ENCODE measurements at regions of chr4 and their contacts with region 1.

Region 1: DNA sequence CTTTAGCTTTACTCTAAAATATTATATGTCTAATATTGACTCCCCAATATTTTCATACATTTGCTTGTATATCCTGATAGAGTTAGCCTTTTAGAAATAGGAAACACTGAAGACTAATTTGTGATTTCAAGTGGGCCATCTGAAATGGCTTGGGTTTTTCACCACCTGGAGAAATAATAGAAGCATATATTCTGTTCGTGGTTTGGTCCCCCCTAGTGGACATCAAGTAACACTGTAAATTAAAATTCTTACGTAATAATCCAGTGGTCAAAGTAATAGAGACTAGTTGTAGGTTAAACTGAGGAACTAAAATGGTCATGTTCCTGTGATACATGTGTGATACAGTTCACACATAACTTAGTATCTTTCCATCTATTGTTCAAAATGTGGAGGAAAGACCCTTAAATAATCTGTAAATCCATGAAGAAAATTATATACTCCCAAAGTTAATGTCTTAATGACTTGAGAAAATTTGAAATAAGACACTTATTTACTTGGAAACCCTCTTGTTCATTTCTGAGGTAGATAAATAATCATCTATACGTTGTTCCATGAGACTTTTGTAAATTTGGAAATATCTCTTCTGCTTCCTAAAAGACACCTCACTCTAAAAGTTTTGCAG is 79.8 kb upstream of the SMARCAD1 start:
- DNase-seq: no peak
- H3K4me3 ChIP-seq: no peak overlapping the region
- H3K27ac ChIP-seq: no peak overlapping the region
- H3K4me1 ChIP-seq: no peaks in the 10 kb centered on the region
- H3K27me3 ChIP-seq: no peaks in the 10 kb centered on the region
- CTCF ChIP-seq: peak; percentile 45 to 67 (median 60)
- EP300 ChIP-seq: no peak
- POLR2A ChIP-seq: no peak

Region 2: GRCh38 chr4:93633721-93634120 is 494.1 kb before region 1 on chr4:
- in situ Hi-C with region 1: no loop called
- intact Hi-C with region 1: no loop called
- DNase-seq: no peak
- H3K4me3 ChIP-seq: no peak overlapping the region
- H3K27ac ChIP-seq: no peak overlapping the region
- H3K4me1 ChIP-seq: no peaks in the 10 kb centered on the region
- H3K27me3 ChIP-seq: no peaks in the 10 kb centered on the region
- CTCF ChIP-seq: no peak
- EP300 ChIP-seq: no peak
- POLR2A ChIP-seq: no peak

Region 3: GRCh38 chr4:93791570-93792195 is 336.1 kb before region 1 on chr4:
- in situ Hi-C with region 1: loop called in 3 of 4 experiments (anchors 10 to 25 kb)
- intact Hi-C with region 1: no loop called
- DNase-seq: peak; percentile 64
- H3K4me3 ChIP-seq: no peak overlapping the region
- H3K27ac ChIP-seq: no peak overlapping the region
- H3K4me1 ChIP-seq: peaks cover 0 to 6% (median 0%) of the 10 kb centered on the region in 4 donors
- H3K27me3 ChIP-seq: no peaks in the 10 kb centered on the region
- CTCF ChIP-seq: peak; percentile 70 to 82 (median 74)
- EP300 ChIP-seq: no peak
- POLR2A ChIP-seq: no peak

Region 4: GRCh38 chr4:93814722-93815121 is 313.1 kb before region 1 on chr4:
- in situ Hi-C with region 1: loop called in 1 of 4 experiments (anchors 25 kb)
- intact Hi-C with region 1: no loop called
- DNase-seq: no peak
- H3K4me3 ChIP-seq: no peak overlapping the region
- H3K27ac ChIP-seq: no peak overlapping the region
- H3K4me1 ChIP-seq: peaks cover 0 to 12% (median 5%) of the 10 kb centered on the region in 4 donors
- H3K27me3 ChIP-seq: peaks cover 2% of the 10 kb centered on the region
- CTCF ChIP-seq: no peak
- EP300 ChIP-seq: no peak
- POLR2A ChIP-seq: no peak

Measured in transverse colon (tissue), 4 donors.